ENCODE measurements at regions of chr22 and their contacts with region 1.

Region 1: GRCh38 chr22:41603873-41604332 is 14.3 kb upstream of the PMM1 start:
- DNase-seq: no peak
- ATAC-seq: no peak
- H3K4me3 ChIP-seq: no peak overlapping the region
- H3K27ac ChIP-seq: no peak overlapping the region
- H3K4me1 ChIP-seq: no peaks in the 10 kb centered on the region
- H3K27me3 ChIP-seq: no peaks in the 10 kb centered on the region
- CTCF ChIP-seq: no peak

Region 2: GRCh38 chr22:41397143-41397811 is 206.6 kb before region 1 on chr22:
- intact Hi-C with region 1: loop called in 1 of 2 experiments (anchors 10 kb)
- DNase-seq: no peak
- ATAC-seq: no peak
- H3K4me3 ChIP-seq: no peak overlapping the region
- H3K27ac ChIP-seq: no peak overlapping the region
- H3K4me1 ChIP-seq: peaks cover 9% of the 10 kb centered on the region
- H3K27me3 ChIP-seq: no peaks in the 10 kb centered on the region
- CTCF ChIP-seq: no peak